Body of pancreas (tissue), 4 donors: ENCODE measurements at regions of chr1 and their contacts with region 1.

Region 1: DNA sequence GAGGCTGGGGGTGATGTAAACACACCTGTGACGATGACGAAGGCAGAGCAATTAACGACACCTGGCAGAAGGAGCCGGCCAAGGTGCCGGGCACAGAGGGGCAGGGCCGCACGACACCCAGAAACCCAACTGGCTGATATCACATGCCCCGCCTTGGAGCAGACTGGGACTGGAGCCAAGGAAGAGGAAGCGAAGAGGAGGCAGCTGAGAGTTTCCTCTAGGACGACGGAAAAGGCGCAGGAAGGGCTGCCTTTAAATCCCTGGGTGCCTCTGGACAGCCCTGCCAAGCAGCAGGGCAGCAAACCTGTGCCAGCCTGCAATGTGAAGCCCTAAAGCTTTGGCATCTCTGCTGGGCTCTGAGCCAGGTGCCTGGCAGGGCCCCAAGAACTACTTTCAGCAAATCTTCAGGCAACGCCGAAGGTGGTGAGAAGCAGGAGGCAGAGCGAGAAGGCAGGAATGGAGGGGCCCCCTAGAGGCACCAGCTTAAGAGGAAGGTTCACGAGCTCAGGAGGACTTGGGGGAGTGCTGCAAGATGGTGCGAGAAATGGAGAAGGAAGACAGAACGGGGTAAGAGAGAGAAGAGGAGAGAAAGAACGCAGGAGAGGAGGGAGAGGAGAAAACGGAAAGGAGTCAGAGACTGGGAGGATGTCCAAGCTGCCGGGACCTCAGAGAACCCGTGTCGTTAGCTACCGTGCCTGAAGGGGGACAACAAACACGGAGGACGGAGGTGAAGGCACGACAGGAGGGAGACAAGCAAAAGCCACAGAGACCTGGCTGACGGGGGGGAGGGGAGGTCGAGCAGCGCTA is 25.3 kb upstream of the PEF1 start:
- DNase-seq: peak; percentile 90 to 97 (median 94)
- ATAC-seq: peak; percentile 84
- H3K4me3 ChIP-seq: no peak overlapping the region
- H3K27ac ChIP-seq: peak overlapping the region; percentile 1 to 69 (median 60)
- H3K4me1 ChIP-seq: peaks cover 15% of the 10 kb centered on the region
- H3K27me3 ChIP-seq: no peaks in the 10 kb centered on the region
- CTCF ChIP-seq: no peak
- POLR2A ChIP-seq: peak in 2 of 3 donors; percentile 19 to 33

Region 2: GRCh38 chr1:31296486-31297276 is 373.3 kb before region 1 on chr1 and contains the starts of genes SNRNP40 and ZCCHC17:
- intact Hi-C with region 1: no loop called
- DNase-seq: peak; percentile 93 to 99 (median 95)
- ATAC-seq: peak; percentile 100
- H3K4me3 ChIP-seq: peak within 1 kb of the TSS; percentile 89
- H3K27ac ChIP-seq: peak within 1 kb of the TSS; percentile 72 to 87 (median 84)
- H3K4me1 ChIP-seq: peaks cover 25% of the 10 kb centered on the region
- H3K27me3 ChIP-seq: no peaks in the 10 kb centered on the region
- CTCF ChIP-seq: peak in 5 of 7 experiments; percentile 3 to 26 (median 10)
- POLR2A ChIP-seq: peak; percentile 66 to 91 (median 89)
- total RNA-seq, gene SNRNP40: 12.7 to 28.7 TPM
- total RNA-seq, gene ZCCHC17: 8.0 to 9.2 TPM

Region 3: DNA sequence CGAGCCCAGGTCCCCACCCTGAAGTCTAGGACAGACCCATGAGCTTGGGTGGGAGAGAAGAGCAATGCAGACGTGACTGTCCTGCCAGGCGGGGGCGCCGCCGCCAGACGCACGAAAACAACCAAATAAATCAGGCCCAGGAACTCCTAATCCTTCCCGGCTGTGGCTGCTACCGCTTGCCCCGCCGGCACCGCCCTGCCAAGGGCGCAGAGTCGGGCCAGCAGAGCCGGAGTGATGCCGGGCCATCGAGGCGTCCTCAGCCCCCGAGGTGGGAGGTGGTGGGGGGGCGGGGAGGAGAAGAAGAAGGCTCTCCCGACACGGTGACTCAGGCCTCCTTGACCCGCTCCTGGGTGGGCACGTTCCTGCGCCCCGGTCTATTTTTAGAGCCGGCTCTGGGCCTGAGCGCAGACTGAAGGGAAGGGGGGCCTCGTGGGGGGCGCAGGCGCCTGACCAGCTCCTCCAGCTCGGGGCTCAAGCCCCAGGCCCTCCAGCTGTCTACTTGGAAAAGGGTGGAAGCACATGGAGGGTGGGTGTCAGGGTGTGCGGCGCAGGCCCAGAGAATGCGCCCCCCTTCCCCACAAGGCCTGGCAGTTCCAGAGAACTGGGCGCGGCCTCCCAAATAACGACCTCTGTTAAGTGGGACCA is 44.6 kb after region 1 on chr1:
- intact Hi-C with region 1: loop called (anchors 5 kb)
- DNase-seq: peak; percentile 29 to 39 (median 36)
- ATAC-seq: peak; percentile 16
- H3K4me3 ChIP-seq: no peak overlapping the region
- H3K27ac ChIP-seq: peak overlapping the region; percentile 1 to 66 (median 36)
- H3K4me1 ChIP-seq: peaks cover 20% of the 10 kb centered on the region
- H3K27me3 ChIP-seq: no peaks in the 10 kb centered on the region
- CTCF ChIP-seq: peak in 1 of 7 experiments; percentile 14
- POLR2A ChIP-seq: no peak